ENCODE measurements at regions of chr3 and their contacts with region 1.

Region 1: GRCh38 chr3:50192689-50193141 is 1.3 kb downstream of the GNAT1 start:
- DNase-seq: peak; percentile 95
- ATAC-seq: peak; percentile 46
- H3K4me3 Mint-ChIP-seq: no peak overlapping the region
- H3K27ac Mint-ChIP-seq: no peak overlapping the region
- H3K4me1 Mint-ChIP-seq: peaks cover 6% of the 10 kb centered on the region
- H3K27me3 Mint-ChIP-seq: peaks cover 9% of the 10 kb centered on the region
- CTCF ChIP-seq: peak; percentile 88

Region 2: GRCh38 chr3:50121416-50122032 is 71.2 kb before region 1 on chr3:
- CTCF ChIA-PET with region 1: interaction called, 74 read pairs
- POLR2A ChIA-PET with region 1: interaction called, 5 read pairs
- DNase-seq: peak; percentile 84
- ATAC-seq: peak; percentile 85
- H3K4me3 Mint-ChIP-seq: no peak overlapping the region
- H3K27ac Mint-ChIP-seq: peak overlapping the region; percentile 70; the same call in 1 of the 2 replicates
- H3K4me1 Mint-ChIP-seq: peaks cover 37% of the 10 kb centered on the region
- H3K27me3 Mint-ChIP-seq: no peaks in the 10 kb centered on the region
- CTCF ChIP-seq: peak; percentile 87

Region 3: DNA sequence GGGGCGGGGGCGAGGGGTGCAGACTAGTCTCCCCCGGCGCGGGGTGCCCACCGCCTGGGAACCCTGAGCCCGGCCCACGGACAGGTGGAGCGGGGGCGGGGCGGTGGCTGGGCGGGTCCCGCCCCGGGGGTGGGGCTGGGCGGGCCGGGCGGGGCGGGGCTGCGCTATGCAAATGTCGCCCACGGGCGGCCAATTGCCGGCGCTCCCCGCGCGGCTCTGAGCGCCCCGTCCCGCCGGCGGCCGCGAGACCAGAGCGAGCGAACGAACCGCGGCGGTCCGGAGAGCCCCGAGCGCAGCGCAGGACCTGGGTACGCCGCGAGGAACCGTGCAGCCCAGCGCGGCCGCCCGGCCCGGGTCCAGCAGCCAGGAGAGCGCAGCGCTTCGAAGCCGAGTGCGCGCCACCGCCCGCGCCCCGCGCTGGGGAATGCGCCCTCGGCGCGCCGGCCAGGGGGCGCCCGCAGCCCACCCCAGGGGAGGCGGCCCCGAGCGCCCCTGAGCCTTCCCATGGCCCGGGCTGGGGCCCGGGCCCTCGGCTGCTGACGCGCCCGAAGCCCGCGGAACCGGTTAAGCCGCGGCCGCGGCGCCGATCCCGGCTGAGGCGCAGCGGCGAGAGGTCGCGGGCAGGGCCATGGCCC is 37.8 kb before region 1 on chr3 and contains the start of gene SEMA3F:
- CTCF ChIA-PET with region 1: interaction called, 40 read pairs
- POLR2A ChIA-PET with region 1: no interaction called
- DNase-seq: peak; percentile 67
- ATAC-seq: peak; percentile 38
- H3K4me3 Mint-ChIP-seq: peak within 1 kb of the TSS; percentile 95
- H3K27ac Mint-ChIP-seq: peak within 1 kb of the TSS; percentile 84; the same call in 1 of the 2 replicates
- H3K4me1 Mint-ChIP-seq: peaks cover 71% of the 10 kb centered on the region
- H3K27me3 Mint-ChIP-seq: peaks cover 26% of the 10 kb centered on the region
- CTCF ChIP-seq: no peak
- total RNA-seq, gene SEMA3F: 49.0 to 52.0 TPM (median 52.0 TPM) in 3 replicates

Region 4: DNA sequence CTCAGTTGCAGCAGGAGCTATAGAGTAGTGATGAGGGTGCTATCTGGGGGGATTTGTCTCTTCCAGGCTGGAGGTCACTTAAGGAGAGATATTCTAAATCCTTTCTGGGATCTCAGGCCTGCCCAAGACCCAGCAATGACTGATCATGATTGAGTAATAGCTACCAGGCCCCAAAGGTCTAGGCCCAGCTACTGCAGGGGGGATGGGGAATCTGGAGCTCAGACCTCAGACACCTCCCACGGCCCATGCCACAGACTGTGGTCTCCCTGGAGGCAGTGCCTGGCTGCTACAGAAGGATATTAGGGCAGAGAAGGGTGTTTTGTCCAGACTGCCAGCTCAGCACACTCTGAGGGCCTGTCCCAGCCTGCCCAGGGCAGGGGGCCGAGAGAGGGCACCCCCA is 19.2 kb after region 1 on chr3:
- CTCF ChIA-PET with region 1: interaction called, 604 read pairs
- POLR2A ChIA-PET with region 1: interaction called, 11 read pairs
- DNase-seq: no peak
- ATAC-seq: no peak
- H3K4me3 Mint-ChIP-seq: no peak overlapping the region
- H3K27ac Mint-ChIP-seq: no peak overlapping the region
- H3K4me1 Mint-ChIP-seq: peaks cover 6% of the 10 kb centered on the region; the same call in 1 of the 2 replicates
- H3K27me3 Mint-ChIP-seq: peaks cover 9% of the 10 kb centered on the region
- CTCF ChIP-seq: no peak

Region 5: DNA sequence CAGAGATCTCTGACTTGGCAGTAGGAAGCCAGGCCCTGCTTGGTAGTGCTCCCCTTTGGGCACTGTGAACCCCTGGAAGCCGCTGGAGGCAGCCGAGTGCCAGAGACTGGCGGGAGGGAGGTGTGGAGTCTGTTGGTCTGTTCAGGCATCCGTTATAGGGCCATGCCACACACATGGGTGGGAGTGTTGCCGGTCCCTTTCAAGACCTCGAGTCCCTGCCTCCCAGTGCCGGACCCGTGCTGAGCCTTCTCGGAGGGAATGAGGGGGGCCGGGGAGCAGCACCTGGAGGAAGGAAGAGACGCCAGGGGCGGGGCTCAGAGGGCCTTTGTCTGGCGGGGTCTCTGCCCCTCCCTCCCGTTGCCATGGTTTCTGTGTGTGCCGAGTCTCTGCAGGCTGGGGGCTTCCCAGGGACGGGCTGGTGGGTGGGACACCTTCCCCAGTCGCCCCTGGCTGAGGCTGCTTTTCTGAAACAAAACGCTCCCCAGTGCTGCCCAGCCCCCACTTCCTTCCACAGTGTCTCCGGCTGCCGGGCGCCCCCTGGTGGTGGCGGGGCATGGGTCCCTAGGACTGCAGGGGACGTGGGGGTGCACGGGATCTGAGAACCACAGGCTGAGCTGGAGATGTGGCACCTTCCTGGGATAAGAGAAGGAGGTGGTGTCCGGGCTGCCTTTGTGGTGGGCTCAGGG is 53.3 kb after region 1 on chr3:
- CTCF ChIA-PET with region 1: interaction called, 90 read pairs
- POLR2A ChIA-PET with region 1: interaction called, 3 read pairs
- DNase-seq: peak; percentile 98
- ATAC-seq: peak; percentile 73
- H3K4me3 Mint-ChIP-seq: peak overlapping the region; percentile 40
- H3K27ac Mint-ChIP-seq: peak overlapping the region; percentile 91
- H3K4me1 Mint-ChIP-seq: peaks cover 59% of the 10 kb centered on the region
- H3K27me3 Mint-ChIP-seq: no peaks in the 10 kb centered on the region
- CTCF ChIP-seq: peak; percentile 99

Region 6: DNA sequence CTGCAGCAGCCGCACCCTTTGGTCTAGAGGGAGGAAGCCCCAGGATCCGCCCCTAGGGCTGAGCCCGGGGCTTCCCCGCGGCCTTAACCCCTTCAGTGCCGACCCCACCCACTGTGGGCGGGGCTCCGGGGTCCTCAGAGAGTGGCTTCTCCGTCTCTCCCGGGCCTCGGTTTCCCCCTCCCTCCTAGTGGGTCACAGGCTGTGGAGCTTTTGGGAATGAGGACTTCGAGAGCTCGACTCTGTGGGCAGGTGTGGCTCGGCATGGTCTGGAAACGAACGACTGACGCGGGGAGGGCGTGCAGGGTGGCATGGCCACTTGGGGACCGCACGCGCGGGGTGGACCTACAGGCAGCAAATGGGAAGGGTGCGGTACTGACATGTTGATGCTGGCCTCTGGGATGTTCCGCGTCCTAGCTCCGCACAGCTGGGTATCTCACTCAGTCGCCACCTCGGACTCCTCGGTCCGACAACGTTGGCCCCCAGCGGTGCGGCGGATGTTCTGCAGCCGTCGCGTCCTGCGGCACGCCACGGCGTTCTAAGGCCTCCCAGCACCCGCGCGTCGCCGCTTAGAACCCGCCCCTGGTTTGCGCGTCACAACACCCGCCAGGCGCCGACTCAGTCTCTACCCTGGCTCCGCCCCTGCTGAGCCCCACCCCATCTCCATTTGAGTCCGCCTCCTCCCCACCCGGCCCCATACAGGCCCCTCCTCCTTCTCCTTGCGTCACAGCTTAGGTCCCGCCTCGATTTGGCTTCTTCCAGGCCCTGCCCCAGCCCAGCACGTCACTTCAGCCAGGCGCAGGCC is 106.3 kb after region 1 on chr3 and contains the starts of genes HYAL3 and NAA80:
- CTCF ChIA-PET with region 1: interaction called, 10 read pairs
- POLR2A ChIA-PET with region 1: no interaction called
- DNase-seq: peak; percentile 100
- ATAC-seq: peak; percentile 88
- H3K4me3 Mint-ChIP-seq: peak within 1 kb of the TSS; percentile 97
- H3K27ac Mint-ChIP-seq: peak within 1 kb of the TSS; percentile 98
- H3K4me1 Mint-ChIP-seq: peaks cover 22% of the 10 kb centered on the region
- H3K27me3 Mint-ChIP-seq: no peaks in the 10 kb centered on the region; the same call in 1 of the 2 replicates
- CTCF ChIP-seq: no peak; the same call in 1 of the 2 replicates
- total RNA-seq, gene HYAL3: 2.9 to 3.8 TPM (median 3.2 TPM) in 3 replicates
- total RNA-seq, gene NAA80: 13.7 to 17.3 TPM (median 13.7 TPM) in 3 replicates